ENCODE measurements at regions of chr5 and their contacts with region 1.

Region 1: DNA sequence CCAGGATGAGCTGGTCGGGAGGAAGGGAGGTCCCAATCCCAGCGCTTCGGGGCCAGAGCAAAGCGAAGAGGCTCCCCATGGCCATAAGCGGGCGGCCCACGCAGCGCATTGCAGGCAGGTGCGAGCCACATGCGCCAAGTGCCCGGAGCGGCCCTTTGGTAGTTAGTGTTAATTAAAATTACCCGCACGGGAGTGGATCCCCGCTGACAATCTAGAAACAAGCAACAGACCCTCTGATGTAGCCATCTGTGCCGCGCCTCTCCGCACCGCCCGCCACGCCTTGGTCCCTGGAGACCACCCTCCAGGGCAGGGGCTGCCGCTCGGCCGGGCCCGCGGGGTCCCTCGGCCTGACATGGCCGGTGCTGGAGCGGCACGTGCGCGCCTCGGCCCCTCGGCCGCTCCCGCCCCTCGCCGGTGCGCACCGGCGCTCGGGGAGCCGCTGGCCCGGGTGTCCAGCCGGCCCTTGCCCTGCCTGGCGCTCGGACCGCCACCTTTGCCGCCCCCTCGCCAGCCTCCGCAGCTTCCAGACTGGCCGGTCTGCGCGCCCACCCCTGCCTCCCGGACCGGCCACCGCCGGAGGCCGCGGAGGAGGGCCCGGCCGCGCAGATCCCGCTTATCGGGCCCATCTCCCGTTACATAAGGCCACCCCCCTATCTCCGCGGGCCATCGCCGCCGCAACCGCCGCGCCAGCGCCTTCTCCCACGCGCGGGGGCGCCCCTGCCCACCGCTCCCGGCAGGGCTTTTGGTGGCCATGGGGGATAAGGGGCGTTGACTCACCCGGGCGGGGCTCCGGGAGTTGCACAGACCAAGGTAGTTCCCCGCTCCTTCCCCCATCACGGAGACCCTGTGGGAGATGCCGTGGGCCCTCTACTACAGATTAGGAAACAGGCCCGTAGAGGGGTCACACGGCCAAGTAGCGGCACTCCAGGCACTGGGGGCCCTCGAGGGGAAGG is 1.9 kb upstream of the IL13 start:
- DNase-seq: peak in 6 of 9 experiments; percentile 17 to 64 (median 32)
- ATAC-seq: peak; percentile 62
- H3K4me3 ChIP-seq: peak overlapping the region; percentile 25 to 54
- H3K4me3 Mint-ChIP-seq: peak overlapping the region; percentile 58
- H3K27ac ChIP-seq: no peak overlapping the region
- H3K27ac Mint-ChIP-seq: no peak overlapping the region
- H3K4me1 ChIP-seq: peaks cover 13% of the 10 kb centered on the region
- H3K4me1 Mint-ChIP-seq: peaks cover 11% of the 10 kb centered on the region
- H3K27me3 ChIP-seq: peaks cover 11 to 20% of the 10 kb centered on the region in 2 experiments
- H3K27me3 Mint-ChIP-seq: peaks cover 39% of the 10 kb centered on the region
- CTCF ChIP-seq: no peak

Region 2: GRCh38 chr5:132628814-132629213 is 27.3 kb before region 1 on chr5:
- CTCF ChIA-PET with region 1: no interaction called
- POLR2A ChIA-PET with region 1: no interaction called
- intact Hi-C with region 1: no loop called
- DNase-seq: no peak
- ATAC-seq: no peak
- H3K4me3 ChIP-seq: no peak overlapping the region
- H3K4me3 Mint-ChIP-seq: no peak overlapping the region
- H3K27ac ChIP-seq: no peak overlapping the region
- H3K27ac Mint-ChIP-seq: no peak overlapping the region
- H3K4me1 ChIP-seq: no peaks in the 10 kb centered on the region
- H3K4me1 Mint-ChIP-seq: peaks cover 7% of the 10 kb centered on the region
- H3K27me3 ChIP-seq: no peaks in the 10 kb centered on the region
- H3K27me3 Mint-ChIP-seq: no peaks in the 10 kb centered on the region
- CTCF ChIP-seq: no peak

Region 3: DNA sequence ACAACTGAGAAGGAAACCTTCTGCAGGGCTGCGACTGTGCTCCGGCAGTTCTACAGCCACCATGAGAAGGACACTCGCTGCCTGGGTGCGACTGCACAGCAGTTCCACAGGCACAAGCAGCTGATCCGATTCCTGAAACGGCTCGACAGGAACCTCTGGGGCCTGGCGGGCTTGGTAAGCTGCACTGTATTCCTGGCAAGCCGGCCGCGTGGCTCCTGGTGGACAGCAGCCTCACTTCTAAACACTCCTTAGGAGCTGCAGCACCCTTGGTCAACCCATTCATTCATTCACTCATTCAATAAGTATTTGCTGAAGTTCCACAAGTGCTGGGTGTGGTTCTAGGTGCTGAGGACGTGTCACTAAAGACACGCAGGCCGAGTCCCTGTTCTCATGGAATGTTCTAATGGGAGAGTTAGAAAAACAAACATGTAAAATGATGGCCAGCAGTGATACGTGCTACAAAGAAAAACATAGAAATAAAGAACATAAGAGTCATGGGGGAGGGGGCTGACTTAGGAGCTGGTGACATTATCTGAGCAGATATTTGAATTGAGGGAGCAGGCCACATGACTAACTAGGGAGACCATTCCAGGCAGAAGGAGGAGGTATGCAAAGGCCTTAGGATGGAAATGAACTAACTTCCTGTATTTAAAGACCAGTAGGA is 23.8 kb after region 1 on chr5:
- CTCF ChIA-PET with region 1: no interaction called
- POLR2A ChIA-PET with region 1: no interaction called
- intact Hi-C with region 1: no loop called
- DNase-seq: peak in 1 of 9 experiments; percentile 23
- ATAC-seq: no peak
- H3K4me3 ChIP-seq: no peak overlapping the region
- H3K4me3 Mint-ChIP-seq: no peak overlapping the region
- H3K27ac ChIP-seq: no peak overlapping the region
- H3K27ac Mint-ChIP-seq: no peak overlapping the region
- H3K4me1 ChIP-seq: no peaks in the 10 kb centered on the region
- H3K4me1 Mint-ChIP-seq: peaks cover 3% of the 10 kb centered on the region
- H3K27me3 ChIP-seq: no peaks in the 10 kb centered on the region
- H3K27me3 Mint-ChIP-seq: no peaks in the 10 kb centered on the region
- CTCF ChIP-seq: no peak

Region 4: GRCh38 chr5:132714456-132715307 is 58.6 kb after region 1 on chr5:
- CTCF ChIA-PET with region 1: interaction called, 3 read pairs
- POLR2A ChIA-PET with region 1: no interaction called
- intact Hi-C with region 1: loop called in 1 of 2 experiments (anchors 2 kb)
- DNase-seq: peak in 2 of 9 experiments; percentile 14 to 41
- ATAC-seq: no peak
- H3K4me3 ChIP-seq: no peak overlapping the region
- H3K4me3 Mint-ChIP-seq: no peak overlapping the region
- H3K27ac ChIP-seq: no peak overlapping the region
- H3K27ac Mint-ChIP-seq: no peak overlapping the region
- H3K4me1 ChIP-seq: no peaks in the 10 kb centered on the region
- H3K4me1 Mint-ChIP-seq: peaks cover 6% of the 10 kb centered on the region
- H3K27me3 ChIP-seq: no peaks in the 10 kb centered on the region
- H3K27me3 Mint-ChIP-seq: no peaks in the 10 kb centered on the region
- CTCF ChIP-seq: peak; percentile 79

Measured in CD8-positive, alpha-beta T cell (primary cell).